ENCODE measurements at regions of chr20 and their contacts with region 1.

Region 1: DNA sequence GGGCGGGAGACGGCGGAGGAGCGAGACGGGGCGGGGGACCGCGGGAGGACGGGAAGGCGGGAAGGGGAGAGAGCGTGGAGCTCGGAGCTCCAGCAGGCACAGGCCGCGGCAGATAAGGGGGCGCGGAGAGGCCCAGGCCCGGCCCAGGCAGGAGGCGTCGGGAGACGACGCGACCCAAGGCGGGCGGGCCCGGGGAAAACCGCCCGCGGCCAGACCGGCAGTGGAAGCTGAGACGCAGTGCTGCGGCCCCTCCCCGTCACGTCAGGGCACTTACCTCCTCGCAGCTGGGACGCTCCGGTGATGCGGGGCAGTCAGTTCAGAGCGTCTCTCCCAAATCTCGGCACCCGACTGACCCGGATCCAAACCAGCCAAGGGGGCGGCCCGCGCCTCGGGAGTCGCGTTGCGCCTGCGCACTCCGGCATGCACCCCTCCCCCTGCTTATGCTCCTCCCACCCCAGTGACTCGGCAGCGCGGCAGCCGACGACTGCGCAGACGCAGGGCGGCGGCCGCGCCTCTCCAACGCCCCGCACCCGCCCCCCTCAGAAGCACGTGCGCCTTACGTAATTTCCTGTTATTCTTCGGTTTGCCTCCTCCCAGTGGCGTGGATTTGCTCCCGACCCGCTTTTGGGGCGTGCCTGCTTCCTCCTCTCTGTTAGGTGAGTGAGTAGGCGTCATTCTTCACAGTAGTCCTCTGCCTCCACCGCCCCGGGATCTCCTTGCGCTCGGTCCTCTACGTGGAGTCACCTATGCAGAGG is at the start of gene OSER1:
- DNase-seq: peak; percentile 95 to 99 (median 98)
- ATAC-seq: peak; percentile 94 to 95
- H3K4me3 ChIP-seq: peak within 1 kb of the TSS; percentile 94
- H3K27ac ChIP-seq: peak within 1 kb of the TSS; percentile 94
- H3K4me1 ChIP-seq: peaks cover 2% of the 10 kb centered on the region
- H3K27me3 ChIP-seq: no peaks in the 10 kb centered on the region
- total RNA-seq, gene OSER1: 22.6 to 44.5 (median 36.1) TPM

Region 2: GRCh38 chr20:44460795-44461141 is 250.2 kb after region 1 on chr20:
- intact Hi-C with region 1: loop called (anchors 5 to 10 kb)
- DNase-seq: no peak
- ATAC-seq: no peak
- H3K4me3 ChIP-seq: no peak overlapping the region
- H3K27ac ChIP-seq: no peak overlapping the region
- H3K4me1 ChIP-seq: no peaks in the 10 kb centered on the region
- H3K27me3 ChIP-seq: no peaks in the 10 kb centered on the region

Region 3: DNA sequence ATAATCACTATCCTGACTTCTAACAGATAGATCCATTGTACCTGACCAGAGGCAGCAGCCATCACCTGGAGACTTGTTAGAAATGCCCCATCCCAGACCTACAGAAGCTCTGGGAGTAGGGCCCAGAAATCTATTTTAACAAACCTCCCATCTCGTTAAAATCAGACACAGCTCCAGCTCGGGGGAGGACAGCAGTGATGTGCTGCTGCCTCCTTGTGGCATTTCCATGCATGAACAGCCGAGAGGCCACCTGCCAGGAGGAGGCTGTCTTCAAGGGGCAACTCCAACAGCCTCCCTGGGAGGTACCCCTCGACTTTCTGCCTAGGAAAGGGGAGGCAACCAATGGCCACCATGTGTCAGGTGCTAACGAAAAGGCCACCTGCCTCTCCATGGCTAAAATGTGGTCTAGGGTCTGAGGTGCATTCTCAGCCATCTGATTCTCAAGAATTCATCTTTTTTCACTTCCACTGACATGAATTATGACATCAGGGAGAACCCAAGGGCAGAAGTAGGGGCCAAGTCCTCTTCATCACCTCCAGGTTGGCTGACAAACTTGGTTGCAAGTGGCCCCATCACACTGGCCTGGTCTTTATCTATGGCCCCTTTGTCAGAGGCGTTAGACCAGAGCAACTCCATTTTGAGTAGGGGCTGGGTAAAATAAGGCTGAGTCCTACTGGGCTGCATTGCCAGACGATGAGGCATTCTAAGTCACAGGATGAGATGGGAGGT is 522.9 kb after region 1 on chr20:
- intact Hi-C with region 1: loop called in 1 of 4 experiments (anchors 10 kb)
- DNase-seq: peak; percentile 72 to 89 (median 86)
- ATAC-seq: peak; percentile 37 to 49
- H3K4me3 ChIP-seq: no peak overlapping the region
- H3K27ac ChIP-seq: peak overlapping the region; percentile 5
- H3K4me1 ChIP-seq: peaks cover 7% of the 10 kb centered on the region
- H3K27me3 ChIP-seq: no peaks in the 10 kb centered on the region

Region 4: GRCh38 chr20:44750081-44750805 is 539.6 kb after region 1 on chr20:
- intact Hi-C with region 1: no loop called
- DNase-seq: peak in 1 of 3 donors; percentile 63
- ATAC-seq: no peak
- H3K4me3 ChIP-seq: no peak overlapping the region
- H3K27ac ChIP-seq: no peak overlapping the region
- H3K4me1 ChIP-seq: peaks cover 3% of the 10 kb centered on the region
- H3K27me3 ChIP-seq: no peaks in the 10 kb centered on the region